ENCODE measurements at regions of chr2 and their contacts with region 1.

Region 1: GRCh38 chr2:71659868-71660518 is 206.6 kb downstream of the DYSF start:
- DNase-seq: no peak
- H3K4me3 ChIP-seq: no peak overlapping the region
- H3K27ac ChIP-seq: no peak overlapping the region
- H3K4me1 ChIP-seq: no peaks in the 10 kb centered on the region
- H3K27me3 ChIP-seq: no peaks in the 10 kb centered on the region
- CTCF ChIP-seq: no peak
- POLR2A ChIP-seq: no peak

Region 2: DNA sequence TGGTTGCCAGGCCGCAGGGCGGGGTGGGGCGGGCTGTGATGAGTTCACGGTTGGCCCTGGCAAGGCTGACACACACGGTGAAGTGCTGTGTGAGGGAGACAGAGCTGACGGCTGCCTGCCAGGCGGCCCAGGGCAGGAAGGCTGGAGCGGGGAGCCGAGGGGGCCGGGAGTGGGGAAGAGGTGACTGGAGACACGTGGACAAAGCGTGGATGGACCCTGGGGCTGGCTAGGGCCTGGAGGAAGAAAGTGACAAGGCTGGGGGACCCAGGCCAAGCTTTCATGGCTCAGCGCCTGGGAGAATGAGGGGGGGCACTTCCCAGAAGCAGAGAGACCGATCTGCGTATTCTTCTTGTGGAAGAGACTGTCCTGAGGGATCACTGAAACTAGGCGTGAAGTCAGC is 83.5 kb before region 1 on chr2:
- CTCF ChIA-PET with region 1: no interaction called
- POLR2A ChIA-PET with region 1: no interaction called
- dilution Hi-C with region 1: no loop called
- intact Hi-C with region 1: no loop called
- DNase-seq: no peak
- H3K4me3 ChIP-seq: no peak overlapping the region
- H3K27ac ChIP-seq: no peak overlapping the region
- H3K4me1 ChIP-seq: no peaks in the 10 kb centered on the region
- H3K27me3 ChIP-seq: no peaks in the 10 kb centered on the region
- CTCF ChIP-seq: no peak
- POLR2A ChIP-seq: no peak

Region 3: GRCh38 chr2:71962911-71963694 is 303.1 kb after region 1 on chr2:
- CTCF ChIA-PET with region 1: no interaction called
- POLR2A ChIA-PET with region 1: no interaction called
- dilution Hi-C with region 1: no loop called
- intact Hi-C with region 1: loop called (anchors 5 kb)
- DNase-seq: no peak
- H3K4me3 ChIP-seq: no peak overlapping the region
- H3K27ac ChIP-seq: no peak overlapping the region
- H3K4me1 ChIP-seq: no peaks in the 10 kb centered on the region
- H3K27me3 ChIP-seq: peaks cover 0 to 5% of the 10 kb centered on the region in 2 experiments
- CTCF ChIP-seq: no peak
- POLR2A ChIP-seq: no peak